CD8-positive, alpha-beta T cell (primary cell): ENCODE measurements at regions of chr15 and their contacts with region 1.

Region 1: DNA sequence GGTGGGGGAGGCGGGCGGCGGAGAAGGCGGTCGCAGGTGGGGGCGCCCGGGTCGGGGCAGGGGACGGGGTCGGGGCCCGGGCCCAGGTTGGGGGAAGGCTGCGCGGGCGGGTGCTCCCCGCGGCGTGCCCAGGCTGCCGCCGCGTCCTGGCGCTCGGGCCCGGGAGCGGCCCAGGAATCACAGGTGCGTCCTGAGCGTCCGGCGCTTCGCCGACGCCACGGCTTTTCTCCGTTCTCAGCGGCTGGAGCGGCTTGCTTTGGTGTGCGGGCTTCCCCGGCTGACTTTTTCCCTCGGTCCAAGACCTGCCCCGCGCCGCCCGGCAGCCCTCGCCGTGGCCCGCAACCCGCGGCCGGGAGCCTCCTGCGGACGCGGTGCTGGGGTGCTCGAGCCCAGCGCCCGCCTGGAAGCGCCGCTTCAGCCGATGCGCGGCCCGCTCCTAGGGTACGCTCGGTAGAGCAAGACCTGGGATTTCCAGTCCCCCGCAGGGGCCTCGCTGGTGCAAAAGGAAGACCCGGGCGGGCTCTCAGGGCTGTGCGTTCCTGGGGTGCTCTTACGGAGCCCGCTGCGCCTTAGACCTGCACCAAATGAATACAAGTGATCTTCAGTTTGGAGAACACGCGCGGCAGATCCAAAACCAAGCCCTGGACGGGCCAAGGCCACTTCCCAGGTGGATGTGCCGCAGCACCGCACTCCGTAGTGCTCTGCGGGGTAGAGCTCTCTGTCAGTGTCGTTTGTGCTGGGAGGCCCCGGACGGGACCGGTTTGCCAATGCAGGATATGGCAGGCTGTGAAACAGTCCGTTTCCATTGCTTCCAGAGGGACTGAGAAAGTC is 639 bp downstream of the NIPA1 start:
- DNase-seq: peak in 3 of 9 experiments; percentile 9 to 23 (median 13)
- ATAC-seq: peak; percentile 27
- H3K4me3 ChIP-seq: peak overlapping the region; percentile 47 to 56
- H3K4me3 Mint-ChIP-seq: peak overlapping the region; percentile 84
- H3K27ac ChIP-seq: no peak overlapping the region
- H3K27ac Mint-ChIP-seq: peak overlapping the region; percentile 64
- H3K4me1 ChIP-seq: peaks cover 9% of the 10 kb centered on the region
- H3K4me1 Mint-ChIP-seq: peaks cover 23% of the 10 kb centered on the region
- H3K27me3 ChIP-seq: no peaks in the 10 kb centered on the region
- H3K27me3 Mint-ChIP-seq: no peaks in the 10 kb centered on the region
- CTCF ChIP-seq: no peak

Region 2: GRCh38 chr15:22735781-22736180 is 51.3 kb before region 1 on chr15:
- CTCF ChIA-PET with region 1: no interaction called
- POLR2A ChIA-PET with region 1: no interaction called
- intact Hi-C with region 1: loop called in 1 of 2 experiments (anchors 10 kb)
- DNase-seq: no peak
- ATAC-seq: no peak
- H3K4me3 ChIP-seq: no peak overlapping the region
- H3K4me3 Mint-ChIP-seq: no peak overlapping the region
- H3K27ac ChIP-seq: no peak overlapping the region
- H3K27ac Mint-ChIP-seq: no peak overlapping the region
- H3K4me1 ChIP-seq: no peaks in the 10 kb centered on the region
- H3K4me1 Mint-ChIP-seq: no peaks in the 10 kb centered on the region
- H3K27me3 ChIP-seq: peaks cover 0 to 3% of the 10 kb centered on the region in 2 experiments
- H3K27me3 Mint-ChIP-seq: peaks cover 5% of the 10 kb centered on the region
- CTCF ChIP-seq: no peak

Region 3: DNA sequence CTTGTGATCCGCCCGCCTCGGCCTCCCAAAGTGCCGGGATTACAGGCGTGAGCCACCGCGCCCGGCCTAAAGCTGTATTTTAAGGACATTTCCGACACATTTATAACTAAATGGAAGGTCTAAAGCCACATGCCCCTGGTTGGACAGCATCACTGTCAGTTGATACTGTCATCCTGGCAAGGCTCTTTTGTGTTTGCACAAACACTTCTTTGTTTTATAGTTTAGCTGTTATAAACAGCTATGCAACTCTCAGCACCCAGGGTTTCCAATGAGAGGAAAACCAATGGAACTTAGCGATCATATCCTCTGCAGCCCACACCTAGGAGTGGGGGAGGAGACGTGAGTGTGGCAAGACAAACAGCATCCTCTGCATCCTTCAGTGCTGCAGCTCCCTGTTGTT is 19.1 kb after region 1 on chr15:
- CTCF ChIA-PET with region 1: no interaction called
- POLR2A ChIA-PET with region 1: no interaction called
- intact Hi-C with region 1: no loop called
- DNase-seq: no peak
- ATAC-seq: no peak
- H3K4me3 ChIP-seq: no peak overlapping the region
- H3K4me3 Mint-ChIP-seq: no peak overlapping the region
- H3K27ac ChIP-seq: no peak overlapping the region
- H3K27ac Mint-ChIP-seq: no peak overlapping the region
- H3K4me1 ChIP-seq: peaks cover 3% of the 10 kb centered on the region
- H3K4me1 Mint-ChIP-seq: peaks cover 20% of the 10 kb centered on the region
- H3K27me3 ChIP-seq: no peaks in the 10 kb centered on the region
- H3K27me3 Mint-ChIP-seq: no peaks in the 10 kb centered on the region
- CTCF ChIP-seq: no peak

Region 4: DNA sequence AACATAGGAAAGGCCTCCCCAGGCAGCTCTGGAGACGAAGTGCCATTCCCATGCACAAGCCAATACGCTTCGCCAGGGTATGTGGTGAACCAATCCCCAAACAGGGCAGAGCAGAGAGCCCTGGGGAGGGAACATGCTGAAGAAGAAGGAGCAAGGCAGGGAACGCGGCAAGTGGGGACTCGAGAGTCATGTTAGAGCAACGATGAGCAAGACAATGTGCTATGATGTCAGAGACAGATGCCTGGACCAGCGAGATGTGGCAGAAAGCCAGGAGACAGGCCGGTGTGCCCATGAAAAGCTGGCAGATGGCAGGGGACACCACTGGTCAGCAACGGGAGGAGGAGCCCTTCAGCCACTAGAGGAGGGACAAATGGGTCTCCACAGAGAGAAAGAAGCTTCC is 91.0 kb after region 1 on chr15:
- CTCF ChIA-PET with region 1: no interaction called
- POLR2A ChIA-PET with region 1: no interaction called
- intact Hi-C with region 1: no loop called
- DNase-seq: no peak
- ATAC-seq: no peak
- H3K4me3 ChIP-seq: no peak overlapping the region
- H3K4me3 Mint-ChIP-seq: no peak overlapping the region
- H3K27ac ChIP-seq: no peak overlapping the region
- H3K27ac Mint-ChIP-seq: no peak overlapping the region
- H3K4me1 ChIP-seq: no peaks in the 10 kb centered on the region
- H3K4me1 Mint-ChIP-seq: peaks cover 2% of the 10 kb centered on the region
- H3K27me3 ChIP-seq: no peaks in the 10 kb centered on the region
- H3K27me3 Mint-ChIP-seq: no peaks in the 10 kb centered on the region
- CTCF ChIP-seq: no peak

Region 5: DNA sequence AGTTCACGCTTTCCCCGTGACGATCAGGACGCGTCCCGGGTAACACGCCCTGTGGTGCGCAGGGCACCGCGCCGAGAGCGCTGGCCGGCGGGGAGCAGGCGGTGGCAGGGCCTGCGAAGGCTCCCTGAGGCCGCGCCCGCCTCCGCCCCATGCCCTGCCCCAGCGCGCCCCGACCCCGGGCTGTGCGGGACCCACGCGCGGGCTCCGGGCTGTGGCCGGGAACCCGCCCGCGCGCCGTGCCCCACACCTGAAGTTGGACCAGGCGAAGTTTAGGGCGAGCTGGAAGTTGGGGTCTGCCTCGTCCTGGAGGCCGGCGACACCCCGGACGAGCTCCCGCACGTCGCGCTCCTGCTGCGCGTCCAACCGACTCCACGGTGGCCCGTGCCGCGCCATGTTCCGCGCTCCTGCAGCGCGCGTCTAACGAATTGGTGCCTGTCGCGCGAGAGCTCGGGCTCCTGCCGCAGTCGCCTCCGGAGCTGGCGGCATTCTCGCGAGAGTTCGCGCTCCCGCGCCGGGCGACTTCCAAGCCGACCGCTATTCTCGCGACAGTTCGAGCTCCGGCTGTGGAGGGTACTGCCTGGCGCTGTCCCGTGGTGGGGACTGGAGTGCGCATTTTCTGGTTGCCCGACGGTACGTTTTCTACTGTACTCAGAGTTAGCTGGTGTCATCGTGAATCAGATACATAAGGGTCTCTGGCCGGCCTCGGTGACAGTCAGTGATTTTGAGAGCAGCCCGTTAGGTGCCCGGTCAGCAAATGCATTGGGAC is 252.3 kb after region 1 on chr15 and contains the start of gene TUBGCP5:
- CTCF ChIA-PET with region 1: no interaction called
- POLR2A ChIA-PET with region 1: no interaction called
- intact Hi-C with region 1: loop called in 1 of 2 experiments (anchors 5 kb)
- DNase-seq: peak; percentile 88 to 98 (median 96)
- ATAC-seq: peak; percentile 93
- H3K4me3 ChIP-seq: peak within 1 kb of the TSS; percentile 65 to 81
- H3K4me3 Mint-ChIP-seq: peak within 1 kb of the TSS; percentile 93
- H3K27ac ChIP-seq: peak within 1 kb of the TSS; percentile 40 to 79
- H3K27ac Mint-ChIP-seq: peak within 1 kb of the TSS; percentile 94
- H3K4me1 ChIP-seq: peaks cover 18% of the 10 kb centered on the region
- H3K4me1 Mint-ChIP-seq: peaks cover 26% of the 10 kb centered on the region
- H3K27me3 ChIP-seq: no peaks in the 10 kb centered on the region
- H3K27me3 Mint-ChIP-seq: no peaks in the 10 kb centered on the region
- CTCF ChIP-seq: no peak
- total RNA-seq, gene TUBGCP5: 34.4 to 38.5 TPM